ENCODE measurements at regions of chr12 and their contacts with region 1.

Region 1: DNA sequence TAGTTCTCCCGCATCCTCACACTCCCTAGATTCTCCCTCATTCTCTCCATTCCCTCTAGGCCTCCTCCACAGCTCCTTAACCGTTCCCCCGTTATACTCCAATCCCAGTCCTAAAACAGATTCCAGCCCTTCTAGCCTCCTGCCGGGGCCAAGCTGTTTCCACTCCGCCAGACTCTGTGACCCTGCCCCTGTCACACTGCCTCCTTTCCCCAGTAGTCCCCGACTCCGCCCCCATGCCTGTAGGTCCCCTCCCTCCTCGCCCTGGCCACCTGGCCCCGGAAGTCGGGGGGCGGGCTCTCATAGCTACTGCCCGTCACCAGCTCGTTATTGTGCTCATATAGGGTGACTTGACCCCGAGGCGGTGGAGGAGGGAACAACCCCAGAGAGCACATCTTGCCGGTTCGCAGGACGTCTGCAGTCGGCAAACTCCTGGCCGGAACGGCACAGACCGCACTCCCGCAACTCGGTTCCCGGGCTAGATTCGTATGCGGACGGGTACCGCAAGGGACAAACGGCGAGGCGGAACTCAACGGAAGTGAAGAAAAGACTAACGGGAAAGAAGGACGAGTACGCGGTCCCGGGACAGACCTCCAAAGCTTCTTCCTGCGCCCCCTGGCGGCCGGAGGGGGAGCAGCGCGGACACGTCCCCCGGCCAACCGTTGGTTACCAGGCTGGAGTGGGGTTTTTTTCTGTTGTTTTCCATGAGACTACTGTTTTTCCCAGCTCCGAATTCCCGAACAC is at the start of gene AAAS:
- DNase-seq: peak; percentile 96
- ATAC-seq: peak; percentile 85
- H3K4me3 Mint-ChIP-seq: peak within 1 kb of the TSS; percentile 96
- H3K27ac Mint-ChIP-seq: peak within 1 kb of the TSS; percentile 99
- H3K4me1 Mint-ChIP-seq: peaks cover 26% of the 10 kb centered on the region
- H3K27me3 Mint-ChIP-seq: peaks cover 37% of the 10 kb centered on the region
- CTCF ChIP-seq: peak; percentile 98
- total RNA-seq, gene AAAS: 95.8 to 104 TPM (median 98.9 TPM) in 3 replicates

Region 2: DNA sequence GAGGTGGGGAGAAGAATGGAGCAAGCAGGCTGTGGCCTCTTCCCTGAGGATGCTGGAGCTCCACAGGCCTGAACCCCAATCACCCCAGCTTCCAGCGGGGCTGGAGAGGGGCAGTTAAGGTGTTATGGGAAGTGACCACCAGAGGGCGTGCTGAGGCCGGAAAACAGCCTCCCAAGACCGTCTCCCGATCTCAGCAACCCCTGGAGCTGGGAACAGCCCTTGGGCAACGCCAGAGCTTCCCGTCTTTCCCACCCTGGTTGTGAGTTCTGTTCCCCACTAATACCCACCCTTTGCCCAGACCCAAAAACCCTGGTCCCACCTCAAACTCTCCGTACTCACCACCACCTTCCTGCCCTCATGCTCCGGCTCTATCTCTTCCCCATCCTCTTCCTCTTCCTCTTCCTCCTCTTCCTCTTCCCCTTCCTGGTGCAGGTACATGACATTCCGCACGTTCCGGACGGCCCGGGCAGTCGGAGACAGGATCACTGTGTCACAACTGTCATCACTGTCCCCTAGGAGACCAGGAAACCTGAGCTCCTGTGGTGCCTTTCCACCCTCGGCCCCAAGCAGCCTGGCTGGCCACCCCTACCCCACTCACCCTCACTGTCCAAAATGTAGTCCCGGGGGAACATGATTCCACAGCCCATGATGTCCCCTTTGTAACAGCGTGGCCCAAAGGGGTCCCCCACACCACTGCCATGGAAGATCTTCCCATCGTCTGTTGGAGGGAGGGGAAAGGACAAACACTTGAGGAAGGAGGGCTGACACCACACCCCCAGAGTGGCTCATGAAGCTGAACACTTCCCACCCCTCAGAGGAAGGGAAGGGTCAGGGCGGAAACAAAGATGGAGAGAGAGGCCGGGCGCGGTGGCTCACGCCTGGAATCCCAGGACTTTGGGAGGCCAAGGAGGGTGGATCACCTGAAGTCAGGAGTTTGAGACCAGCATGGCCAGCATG is 255.0 kb before region 1 on chr12:
- CTCF ChIA-PET with region 1: interaction called, 16 read pairs
- POLR2A ChIA-PET with region 1: no interaction called
- DNase-seq: peak; percentile 87
- ATAC-seq: peak; percentile 73
- H3K4me3 Mint-ChIP-seq: no peak overlapping the region
- H3K27ac Mint-ChIP-seq: no peak overlapping the region
- H3K4me1 Mint-ChIP-seq: peaks cover 23% of the 10 kb centered on the region
- H3K27me3 Mint-ChIP-seq: peaks cover 21% of the 10 kb centered on the region
- CTCF ChIP-seq: peak; percentile 96

Region 3: DNA sequence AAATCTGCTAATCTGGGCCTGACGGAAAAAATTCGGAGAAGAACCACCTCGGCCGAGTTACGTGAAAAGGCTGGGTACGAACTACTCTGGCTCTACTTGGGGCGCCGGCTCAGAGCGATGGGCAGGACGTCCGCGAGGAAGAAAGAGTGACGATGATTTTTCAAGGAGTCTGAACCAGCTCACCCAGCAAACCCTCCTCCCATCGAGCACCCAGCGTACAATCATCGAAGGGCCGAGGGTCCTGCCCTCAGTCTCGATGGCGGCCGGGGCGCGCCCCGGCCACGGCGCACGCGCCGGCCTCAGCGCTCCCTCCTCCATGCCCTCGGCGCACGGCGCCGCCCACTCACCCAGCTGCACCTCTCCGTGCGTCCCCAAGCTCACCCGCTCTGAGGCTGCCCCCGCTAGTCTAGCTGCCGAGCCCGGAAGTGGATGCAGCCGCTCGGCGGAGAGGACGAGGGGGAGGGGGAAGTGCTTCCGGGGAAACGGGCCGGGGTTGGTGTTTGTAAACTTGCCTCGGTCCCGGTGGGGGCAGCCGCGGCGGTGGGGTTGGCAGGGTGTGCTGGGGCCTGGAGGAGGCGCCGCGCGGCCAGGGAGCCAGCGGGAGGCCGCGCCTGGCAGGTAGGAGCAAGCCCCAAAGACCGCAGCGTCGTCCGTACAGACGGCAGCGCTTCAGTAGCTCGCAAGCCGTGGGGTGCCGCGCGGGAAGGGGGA is 140.9 kb before region 1 on chr12 and contains the starts of genes CSAD and ZNF740:
- CTCF ChIA-PET with region 1: interaction called, 22 read pairs
- POLR2A ChIA-PET with region 1: no interaction called
- DNase-seq: peak; percentile 96
- ATAC-seq: peak; percentile 97
- H3K4me3 Mint-ChIP-seq: peak within 1 kb of the TSS; percentile 91
- H3K27ac Mint-ChIP-seq: peak within 1 kb of the TSS; percentile 93
- H3K4me1 Mint-ChIP-seq: peaks cover 24% of the 10 kb centered on the region
- H3K27me3 Mint-ChIP-seq: peaks cover 48% of the 10 kb centered on the region
- CTCF ChIP-seq: no peak
- total RNA-seq, gene CSAD: 11.5 to 12.6 TPM (median 12.3 TPM) in 3 replicates
- total RNA-seq, gene ZNF740: 26.6 to 36.6 TPM (median 36.1 TPM) in 3 replicates

Region 4: GRCh38 chr12:53241623-53242412 is 79.4 kb before region 1 on chr12:
- CTCF ChIA-PET with region 1: interaction called, 15 read pairs
- POLR2A ChIA-PET with region 1: no interaction called
- DNase-seq: peak; percentile 66
- ATAC-seq: peak; percentile 75
- H3K4me3 Mint-ChIP-seq: 0 out of 2 replicates have a peak overlapping the region, but pooled peaks have one; percentile 6
- H3K27ac Mint-ChIP-seq: peak overlapping the region; percentile 18; the same call in 1 of the 2 replicates
- H3K4me1 Mint-ChIP-seq: peaks cover 45% of the 10 kb centered on the region
- H3K27me3 Mint-ChIP-seq: peaks cover 2% of the 10 kb centered on the region; the same call in 1 of the 2 replicates
- CTCF ChIP-seq: no peak

Region 5: DNA sequence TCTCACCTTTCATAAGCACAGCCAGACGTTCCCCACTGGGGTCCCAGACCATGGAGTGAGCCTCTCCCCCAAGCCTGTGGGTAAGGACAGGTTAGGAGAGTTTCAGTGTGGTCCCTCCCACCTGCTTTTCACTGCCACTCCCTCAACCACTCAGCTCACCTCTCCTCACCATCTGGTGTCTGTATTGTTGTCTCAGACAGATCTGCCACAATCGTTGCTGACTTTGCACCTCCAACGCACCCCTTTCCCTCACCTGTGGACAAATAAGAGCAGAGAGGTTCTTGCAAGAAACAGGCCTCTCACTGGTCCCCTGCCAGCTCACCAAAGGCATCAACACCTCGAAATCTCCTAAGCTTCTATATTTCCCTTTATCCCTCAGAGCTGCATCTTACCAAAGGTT is 13.0 kb before region 1 on chr12:
- CTCF ChIA-PET with region 1: interaction called, 34 read pairs
- POLR2A ChIA-PET with region 1: interaction called, 3 read pairs
- DNase-seq: no peak
- ATAC-seq: no peak
- H3K4me3 Mint-ChIP-seq: no peak overlapping the region
- H3K27ac Mint-ChIP-seq: no peak overlapping the region
- H3K4me1 Mint-ChIP-seq: no peaks in the 10 kb centered on the region
- H3K27me3 Mint-ChIP-seq: no peaks in the 10 kb centered on the region
- CTCF ChIP-seq: no peak

Region 6: DNA sequence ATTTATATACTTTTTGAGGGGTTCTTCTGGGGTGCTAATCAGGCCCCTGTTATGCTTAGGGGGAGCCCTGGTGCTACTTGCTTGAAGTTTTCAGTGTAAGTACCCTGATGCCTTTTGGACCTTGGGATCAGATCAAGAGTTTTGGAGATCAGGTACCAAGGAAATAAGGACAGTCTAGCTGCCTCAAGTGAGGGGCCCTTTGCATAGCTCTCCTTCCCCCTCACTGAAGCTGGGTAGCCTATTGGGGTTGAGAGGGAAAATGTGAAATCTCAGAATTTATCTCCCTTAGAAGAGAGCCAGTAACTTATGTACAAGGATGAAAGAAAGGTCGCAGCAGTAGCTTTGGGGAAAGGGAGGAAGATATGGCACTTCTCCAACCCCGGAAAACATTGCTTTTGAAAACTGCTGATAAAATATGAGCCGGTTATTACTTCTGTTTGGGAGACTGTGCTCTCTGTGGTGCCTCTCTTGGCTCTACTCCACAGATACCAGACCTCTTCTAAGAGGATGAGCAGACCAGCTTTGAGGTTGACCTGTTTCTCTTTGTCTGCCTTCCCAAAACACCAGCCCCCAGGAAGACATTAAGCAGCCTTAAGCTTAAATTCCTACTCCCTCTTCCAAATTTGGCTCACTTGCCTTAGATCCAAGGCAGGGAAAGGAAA is 93.6 kb after region 1 on chr12:
- CTCF ChIA-PET with region 1: interaction called, 18 read pairs
- POLR2A ChIA-PET with region 1: interaction called, 7 read pairs
- DNase-seq: no peak
- ATAC-seq: no peak; the same call in 1 of the 2 replicates
- H3K4me3 Mint-ChIP-seq: no peak overlapping the region
- H3K27ac Mint-ChIP-seq: no peak overlapping the region
- H3K4me1 Mint-ChIP-seq: peaks cover 21% of the 10 kb centered on the region
- H3K27me3 Mint-ChIP-seq: no peaks in the 10 kb centered on the region
- CTCF ChIP-seq: no peak

Region 7: GRCh38 chr12:53492830-53493611 is 171.8 kb after region 1 on chr12:
- CTCF ChIA-PET with region 1: interaction called, 27 read pairs
- POLR2A ChIA-PET with region 1: no interaction called
- DNase-seq: peak; percentile 96
- ATAC-seq: peak; percentile 78
- H3K4me3 Mint-ChIP-seq: peak overlapping the region; percentile 88
- H3K27ac Mint-ChIP-seq: peak overlapping the region; percentile 99
- H3K4me1 Mint-ChIP-seq: peaks cover 46% of the 10 kb centered on the region
- H3K27me3 Mint-ChIP-seq: no peaks in the 10 kb centered on the region
- CTCF ChIP-seq: no peak